HEK293 (cell line): ENCODE measurements at regions of chr1 and their contacts with region 1.

Region 1: GRCh38 chr1:13813398-13814012 is 113.5 kb downstream of the PRDM2 start:
- H3K4me3 ChIP-seq: no peak overlapping the region
- H3K27ac ChIP-seq: no peak overlapping the region
- H3K4me1 ChIP-seq: no peaks in the 10 kb centered on the region
- CTCF ChIP-seq: peak; percentile 60

Region 2: GRCh38 chr1:13469343-13469742 is 344.2 kb before region 1 on chr1:
- CTCF ChIA-PET with region 1: no interaction called
- POLR2A ChIA-PET with region 1: no interaction called
- H3K4me3 ChIP-seq: no peak overlapping the region
- H3K27ac ChIP-seq: no peak overlapping the region
- H3K4me1 ChIP-seq: no peaks in the 10 kb centered on the region
- CTCF ChIP-seq: no peak

Region 3: GRCh38 chr1:13783551-13783950 is 30.0 kb before region 1 on chr1:
- CTCF ChIA-PET with region 1: no interaction called
- POLR2A ChIA-PET with region 1: no interaction called
- H3K4me3 ChIP-seq: no peak overlapping the region
- H3K27ac ChIP-seq: no peak overlapping the region
- H3K4me1 ChIP-seq: no peaks in the 10 kb centered on the region
- CTCF ChIP-seq: no peak

Region 4: DNA sequence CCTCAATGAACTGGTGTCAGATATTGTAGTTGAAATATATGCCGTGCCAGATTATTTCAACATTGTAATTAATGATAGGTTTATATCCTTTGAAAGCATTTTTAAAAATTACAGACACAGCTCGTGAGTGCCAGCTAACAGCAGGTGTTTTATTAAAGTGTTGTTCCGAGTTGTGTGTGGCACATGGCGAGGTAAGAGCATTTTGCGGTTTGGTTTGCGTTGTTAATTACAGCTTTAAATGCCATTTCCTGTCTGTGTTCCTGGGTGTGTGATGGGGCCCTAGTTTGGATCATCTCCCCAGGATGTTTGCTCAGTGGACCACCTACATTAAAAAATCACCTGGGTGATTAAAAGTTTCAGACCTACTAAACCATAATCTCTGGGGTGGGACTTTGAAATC is 16.1 kb before region 1 on chr1:
- CTCF ChIA-PET with region 1: interaction called, 13 read pairs
- POLR2A ChIA-PET with region 1: no interaction called
- H3K4me3 ChIP-seq: no peak overlapping the region
- H3K27ac ChIP-seq: no peak overlapping the region
- H3K4me1 ChIP-seq: no peaks in the 10 kb centered on the region; the same call in 1 of the 2 replicates
- CTCF ChIP-seq: no peak

Region 5: DNA sequence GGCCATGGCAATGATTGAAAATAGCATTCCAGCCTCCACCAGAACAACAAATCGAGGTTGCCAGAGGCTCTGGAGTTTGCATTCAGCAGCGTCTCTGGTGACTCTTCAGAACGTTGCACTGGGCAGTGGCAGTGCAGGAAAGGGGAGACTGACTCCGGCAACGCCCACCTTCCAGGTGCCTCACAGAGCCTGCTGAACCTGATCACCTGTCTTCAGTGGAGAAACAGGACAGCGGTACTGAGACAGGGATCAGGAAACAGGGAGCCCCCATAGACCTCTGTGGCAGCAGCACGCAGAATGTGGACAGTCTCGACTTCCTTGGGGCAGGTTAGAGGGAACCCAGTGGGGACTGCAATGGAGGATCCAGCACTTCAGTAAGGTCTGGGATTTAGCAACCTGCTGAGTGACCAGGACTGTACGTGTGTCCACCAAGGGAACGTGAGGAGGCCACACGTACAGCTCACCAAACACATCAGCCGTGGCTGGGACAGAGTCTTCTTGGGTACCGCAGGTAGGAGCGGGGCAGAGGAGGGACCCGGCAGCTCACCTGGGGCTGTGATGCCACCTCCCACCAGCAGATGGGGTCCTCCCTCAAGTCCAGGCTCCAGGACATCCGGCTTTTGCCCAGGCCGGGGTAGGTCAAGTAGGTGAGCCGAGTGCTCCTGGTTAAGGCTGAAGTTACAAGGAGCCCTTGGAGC is 15.1 kb after region 1 on chr1:
- CTCF ChIA-PET with region 1: interaction called, 11 read pairs
- POLR2A ChIA-PET with region 1: no interaction called
- H3K4me3 ChIP-seq: peak overlapping the region; percentile 4; the same call in 1 of the 2 replicates
- H3K27ac ChIP-seq: no peak overlapping the region
- H3K4me1 ChIP-seq: no peaks in the 10 kb centered on the region
- CTCF ChIP-seq: peak; percentile 52; the same call in 1 of the 2 replicates

Region 6: GRCh38 chr1:13935336-13935735 is 121.8 kb after region 1 on chr1:
- CTCF ChIA-PET with region 1: no interaction called
- POLR2A ChIA-PET with region 1: no interaction called
- H3K4me3 ChIP-seq: no peak overlapping the region
- H3K27ac ChIP-seq: no peak overlapping the region
- H3K4me1 ChIP-seq: no peaks in the 10 kb centered on the region
- CTCF ChIP-seq: no peak